Thyroid gland (tissue), 4 donors: ENCODE measurements at regions of chr1 and their contacts with region 1.

Region 1: DNA sequence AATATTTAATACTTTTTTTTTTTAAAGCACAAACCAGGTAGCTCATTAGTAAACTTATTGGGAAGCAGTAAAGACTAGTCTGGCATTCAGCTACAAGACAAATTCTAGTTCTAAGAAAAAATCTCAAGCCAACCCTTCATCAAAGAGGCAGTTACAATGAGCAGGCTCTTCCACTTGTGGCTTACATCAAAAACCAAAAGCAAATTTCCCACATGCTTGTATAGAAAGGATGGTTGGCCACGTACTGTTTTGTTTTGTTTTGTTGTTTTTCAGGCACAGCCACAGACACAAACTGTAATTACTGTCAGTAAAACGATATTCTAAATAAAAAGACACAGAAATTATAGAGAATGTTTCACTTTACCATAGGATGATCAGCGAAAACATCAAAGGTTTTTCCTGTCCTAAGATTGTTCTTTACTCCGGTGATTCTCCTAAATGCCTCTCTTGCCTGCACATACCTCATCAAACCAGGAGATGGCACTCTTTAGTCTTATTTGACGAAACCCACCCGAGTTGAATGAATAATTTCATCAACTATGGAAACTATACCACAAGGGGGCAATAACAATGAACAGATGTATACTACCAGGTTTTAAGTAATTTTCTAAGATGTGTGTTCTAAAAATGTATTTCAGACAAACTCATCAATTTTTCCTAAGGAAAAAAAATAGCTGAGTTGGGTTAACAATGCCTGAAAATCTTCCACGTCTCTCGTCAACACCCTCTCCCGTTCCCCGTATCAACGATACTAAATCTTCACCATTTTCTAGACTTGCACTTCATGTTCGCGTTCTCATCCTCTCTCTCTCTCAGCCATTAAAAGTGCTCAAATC is 26.9 kb downstream of the RPL5 start:
- DNase-seq: peak; percentile 37 to 48
- H3K4me3 ChIP-seq: no peak overlapping the region
- H3K27ac ChIP-seq: no peak overlapping the region
- H3K4me1 ChIP-seq: no peaks in the 10 kb centered on the region
- H3K27me3 ChIP-seq: no peaks in the 10 kb centered on the region
- CTCF ChIP-seq: peak; percentile 84 to 100 (median 94)
- POLR2A ChIP-seq: no peak

Region 2: GRCh38 chr1:92298573-92299476 is 560.0 kb before region 1 on chr1 and contains the starts of genes GLMN and RPAP2:
- intact Hi-C with region 1: no loop called
- DNase-seq: peak; percentile 83 to 87
- H3K4me3 ChIP-seq: peak within 1 kb of the TSS; percentile 66 to 97 (median 72)
- H3K27ac ChIP-seq: peak within 1 kb of the TSS; percentile 87 to 94 (median 94)
- H3K4me1 ChIP-seq: peaks cover 13 to 15% of the 10 kb centered on the region in 2 donors
- H3K27me3 ChIP-seq: no peaks in the 10 kb centered on the region
- CTCF ChIP-seq: no peak
- POLR2A ChIP-seq: peak in 1 of 2 donors; percentile 96
- total RNA-seq, gene GLMN: 15.2 to 18.8 (median 17.0) TPM
- total RNA-seq, gene RPAP2: 8.7 to 28.0 (median 17.6) TPM

Region 3: DNA sequence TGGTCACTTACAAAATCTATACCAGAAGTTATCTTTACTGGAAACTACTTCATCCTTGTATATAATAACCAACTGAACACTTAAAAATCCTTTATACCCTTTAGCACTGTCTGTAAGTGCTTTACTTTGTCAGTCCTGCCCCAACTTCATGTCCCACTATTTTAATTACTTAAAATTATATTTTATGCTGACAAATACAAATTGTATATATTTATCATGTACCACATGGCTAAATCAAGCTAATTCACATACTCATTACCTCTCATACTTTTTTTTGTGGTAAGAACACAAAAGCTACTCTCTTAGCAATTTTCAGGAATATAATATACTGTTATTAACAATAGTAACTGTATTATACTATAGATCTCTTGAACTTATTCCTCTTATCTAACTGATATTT is 136.9 kb before region 1 on chr1:
- intact Hi-C with region 1: no loop called
- DNase-seq: no peak
- H3K4me3 ChIP-seq: no peak overlapping the region
- H3K27ac ChIP-seq: no peak overlapping the region
- H3K4me1 ChIP-seq: no peaks in the 10 kb centered on the region
- H3K27me3 ChIP-seq: no peaks in the 10 kb centered on the region
- CTCF ChIP-seq: no peak
- POLR2A ChIP-seq: no peak

Region 4: GRCh38 chr1:92960395-92961130 is 101.8 kb after region 1 on chr1:
- intact Hi-C with region 1: loop called (anchors 2 kb)
- DNase-seq: peak; percentile 71 to 72
- H3K4me3 ChIP-seq: peak overlapping the region; percentile 27 to 87 (median 85)
- H3K27ac ChIP-seq: peak overlapping the region; percentile 90 to 96 (median 92)
- H3K4me1 ChIP-seq: peaks cover 36 to 43% of the 10 kb centered on the region in 2 donors
- H3K27me3 ChIP-seq: no peaks in the 10 kb centered on the region
- CTCF ChIP-seq: peak; percentile 8 to 87 (median 62)
- POLR2A ChIP-seq: peak in 1 of 2 donors; percentile 40

Region 5: DNA sequence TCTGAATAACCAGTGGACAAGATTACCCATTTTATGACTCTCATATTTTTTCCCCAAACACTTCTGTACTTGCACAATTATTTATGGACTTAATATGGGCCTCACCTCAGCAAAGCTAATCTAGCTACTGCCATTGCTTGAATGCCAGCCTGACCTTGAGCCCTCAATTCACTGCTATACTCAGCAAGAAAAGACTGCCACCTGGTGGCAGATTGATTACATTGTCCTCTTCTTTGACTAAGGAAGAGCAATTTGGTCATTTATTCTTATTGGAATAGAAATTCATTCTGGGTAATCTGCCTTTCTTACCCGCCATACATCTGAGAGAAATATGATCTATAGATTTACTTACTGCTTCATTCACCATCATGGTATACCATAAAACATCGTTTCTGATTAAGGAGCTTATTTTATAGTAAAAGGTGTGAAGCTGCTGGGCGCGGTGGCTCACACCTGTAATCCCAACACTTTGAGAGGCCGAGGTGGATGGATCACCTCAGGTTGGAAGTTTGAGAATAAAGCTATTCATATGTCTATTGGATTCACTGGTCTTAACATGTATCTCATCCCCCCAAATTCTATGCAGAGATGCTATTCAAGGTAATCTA is 135.4 kb after region 1 on chr1:
- intact Hi-C with region 1: loop called (anchors 2 kb)
- DNase-seq: peak; percentile 77 to 78
- H3K4me3 ChIP-seq: no peak overlapping the region
- H3K27ac ChIP-seq: peak overlapping the region in 1 of 3 donors; percentile 31
- H3K4me1 ChIP-seq: peaks cover 6 to 7% of the 10 kb centered on the region in 2 donors
- H3K27me3 ChIP-seq: no peaks in the 10 kb centered on the region
- CTCF ChIP-seq: peak; percentile 76 to 95 (median 84)
- POLR2A ChIP-seq: no peak

Region 6: DNA sequence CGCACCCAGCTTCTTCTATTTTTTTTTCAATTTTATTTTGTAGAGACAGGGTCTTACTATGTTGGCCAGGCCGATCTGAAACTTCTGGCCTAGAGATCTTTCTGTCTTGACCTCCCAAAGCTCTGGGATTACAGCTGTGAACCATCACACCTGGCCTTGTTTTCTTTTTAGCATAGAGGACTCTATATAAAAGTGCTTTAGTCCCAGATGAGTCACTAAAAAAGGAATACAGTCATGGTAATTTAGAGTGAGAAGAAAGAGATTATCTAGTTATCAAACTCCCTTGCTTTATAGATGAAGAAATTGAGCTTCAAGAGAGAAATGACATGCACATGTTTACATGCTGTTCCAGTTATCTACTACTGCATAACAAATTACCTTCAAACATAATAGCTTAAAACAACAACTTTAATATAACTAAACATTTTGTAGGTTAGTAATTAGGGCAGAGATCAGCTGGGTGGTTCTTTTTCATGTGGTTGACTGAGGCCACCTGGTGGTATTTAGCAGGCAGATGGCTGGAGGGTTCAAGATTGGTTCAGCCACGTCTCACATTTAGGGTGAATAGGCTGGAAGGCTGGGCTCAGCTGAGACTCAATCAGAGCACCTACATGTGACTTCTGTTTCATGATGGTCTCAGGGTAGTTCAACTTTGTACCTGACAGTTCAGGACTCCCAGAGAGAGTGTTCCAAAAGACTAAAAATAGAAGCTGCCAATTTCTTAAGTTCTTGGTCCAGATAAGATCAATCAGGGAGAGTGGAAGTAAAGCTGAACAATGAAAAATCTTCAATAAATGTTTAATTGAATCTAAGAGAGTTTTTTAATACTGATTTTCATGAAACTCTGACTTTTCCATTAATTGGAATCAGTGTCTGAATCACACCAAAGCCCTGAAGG is 203.4 kb after region 1 on chr1:
- intact Hi-C with region 1: loop called (anchors 10 kb)
- DNase-seq: peak; percentile 36 to 42
- H3K4me3 ChIP-seq: no peak overlapping the region
- H3K27ac ChIP-seq: no peak overlapping the region
- H3K4me1 ChIP-seq: no peaks in the 10 kb centered on the region
- H3K27me3 ChIP-seq: no peaks in the 10 kb centered on the region
- CTCF ChIP-seq: peak in 4 of 6 experiments; percentile 54 to 70 (median 64)
- POLR2A ChIP-seq: no peak

Region 7: DNA sequence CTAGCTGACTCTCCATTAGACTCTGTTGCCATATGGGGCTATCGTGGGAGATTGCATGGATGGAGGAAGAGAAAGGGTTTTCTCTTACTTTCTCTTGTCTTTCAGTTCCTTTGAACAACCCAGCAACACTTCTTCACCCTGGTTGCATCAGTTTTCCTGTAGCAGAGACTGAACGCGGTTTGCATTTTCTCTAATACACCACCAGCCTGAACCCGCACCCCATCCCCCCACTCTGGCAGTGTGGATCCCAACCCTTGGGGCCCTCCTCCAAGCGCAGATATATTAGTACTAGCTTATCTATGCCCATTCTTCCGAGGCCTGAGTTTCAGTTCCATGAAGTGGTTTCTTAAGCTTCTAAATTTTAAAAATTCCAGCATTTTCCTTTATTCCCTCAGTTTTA is 499.5 kb after region 1 on chr1:
- intact Hi-C with region 1: no loop called
- DNase-seq: no peak
- H3K4me3 ChIP-seq: no peak overlapping the region
- H3K27ac ChIP-seq: no peak overlapping the region
- H3K4me1 ChIP-seq: peaks cover 6 to 8% of the 10 kb centered on the region in 2 donors
- H3K27me3 ChIP-seq: no peaks in the 10 kb centered on the region
- CTCF ChIP-seq: no peak
- POLR2A ChIP-seq: no peak